Activated B cell treated with CpG ODN at 0.5 μM for 24 hours (primary cell): ENCODE measurements at regions of chr7 and their contacts with region 1.

Region 1: DNA sequence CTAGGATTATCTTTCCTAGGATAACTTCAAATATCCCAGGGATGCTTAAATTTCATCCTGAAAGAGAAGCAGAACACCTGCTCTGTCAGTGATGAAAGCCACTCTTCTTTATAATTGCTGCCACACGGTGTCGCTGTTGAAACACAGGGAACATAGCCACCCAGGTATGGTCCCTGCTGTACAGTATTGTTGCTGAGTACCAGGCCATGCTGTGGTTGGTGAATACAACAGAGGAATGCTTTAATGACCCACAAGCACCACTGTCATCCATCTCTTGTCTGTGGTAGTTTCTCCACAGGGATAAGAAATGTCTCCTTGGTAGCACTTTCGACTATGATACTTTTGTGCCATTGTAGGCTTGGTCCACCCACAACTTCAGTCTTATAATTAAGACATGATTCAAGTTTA is 70.6 kb upstream of the STARD3NL start:
- DNase-seq: no peak
- ATAC-seq: peak; percentile 62
- H3K4me3 Mint-ChIP-seq: no peak overlapping the region
- H3K27ac Mint-ChIP-seq: no peak overlapping the region
- H3K4me1 Mint-ChIP-seq: no peaks in the 10 kb centered on the region
- H3K27me3 Mint-ChIP-seq: peaks cover 9% of the 10 kb centered on the region
- CTCF ChIP-seq: peak; percentile 59

Region 2: DNA sequence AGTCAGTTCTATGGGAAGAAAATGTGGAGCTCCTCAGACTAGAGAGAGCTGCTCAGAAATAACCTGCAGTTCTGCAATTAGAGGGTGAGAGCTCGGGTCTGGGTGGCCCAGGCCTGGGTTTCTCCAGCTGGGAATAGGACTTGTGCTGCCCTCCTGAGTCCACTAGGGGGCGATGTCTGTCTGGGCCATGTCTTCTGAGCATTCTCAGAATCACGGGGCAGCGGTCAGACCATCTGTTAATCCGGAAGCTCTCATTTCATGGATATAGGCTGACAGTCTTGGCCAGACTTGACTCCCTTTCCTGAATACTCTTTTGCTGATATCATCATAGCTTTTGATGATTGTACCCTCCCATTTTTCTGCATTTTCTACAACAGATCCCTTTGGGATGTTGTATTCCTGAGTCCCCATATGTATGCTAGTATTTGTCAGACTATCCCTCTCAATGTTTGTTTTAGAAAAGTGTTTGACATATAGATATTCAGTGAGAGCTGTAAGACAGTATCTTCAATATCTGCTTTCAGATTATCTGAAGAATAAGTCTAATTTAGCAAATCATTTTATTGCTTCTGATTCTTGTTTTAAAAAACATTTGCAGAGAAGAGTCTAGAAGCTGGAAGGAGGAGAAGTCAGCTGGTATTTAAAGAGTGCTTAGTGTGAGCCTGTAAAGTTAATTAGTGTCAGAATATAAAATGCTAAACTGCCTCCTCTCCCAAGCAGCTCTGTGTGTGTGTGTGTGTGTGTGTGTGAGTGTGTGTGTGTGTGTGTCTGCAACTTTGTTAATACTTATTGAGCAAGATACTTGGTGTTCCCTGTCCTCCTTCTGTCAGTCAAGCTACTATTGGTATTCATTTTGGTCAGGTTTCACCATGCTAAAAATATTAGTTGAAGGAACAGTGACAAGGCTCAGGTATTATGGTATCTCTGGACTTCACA is 108.5 kb after region 1 on chr7:
- CTCF ChIA-PET with region 1: interaction called, 153 read pairs
- POLR2A ChIA-PET with region 1: no interaction called
- intact Hi-C with region 1: no loop called
- DNase-seq: peak; percentile 40
- ATAC-seq: peak; percentile 97
- H3K4me3 Mint-ChIP-seq: no peak overlapping the region
- H3K27ac Mint-ChIP-seq: no peak overlapping the region
- H3K4me1 Mint-ChIP-seq: peaks cover 7% of the 10 kb centered on the region
- H3K27me3 Mint-ChIP-seq: no peaks in the 10 kb centered on the region
- CTCF ChIP-seq: peak; percentile 75

Region 3: GRCh38 chr7:38222481-38223096 is 115.1 kb after region 1 on chr7:
- CTCF ChIA-PET with region 1: interaction called, 153 read pairs
- POLR2A ChIA-PET with region 1: no interaction called
- intact Hi-C with region 1: loop called (anchors 1 kb)
- DNase-seq: no peak
- ATAC-seq: peak; percentile 67
- H3K4me3 Mint-ChIP-seq: no peak overlapping the region
- H3K27ac Mint-ChIP-seq: no peak overlapping the region
- H3K4me1 Mint-ChIP-seq: no peaks in the 10 kb centered on the region
- H3K27me3 Mint-ChIP-seq: no peaks in the 10 kb centered on the region
- CTCF ChIP-seq: peak; percentile 76

Region 4: DNA sequence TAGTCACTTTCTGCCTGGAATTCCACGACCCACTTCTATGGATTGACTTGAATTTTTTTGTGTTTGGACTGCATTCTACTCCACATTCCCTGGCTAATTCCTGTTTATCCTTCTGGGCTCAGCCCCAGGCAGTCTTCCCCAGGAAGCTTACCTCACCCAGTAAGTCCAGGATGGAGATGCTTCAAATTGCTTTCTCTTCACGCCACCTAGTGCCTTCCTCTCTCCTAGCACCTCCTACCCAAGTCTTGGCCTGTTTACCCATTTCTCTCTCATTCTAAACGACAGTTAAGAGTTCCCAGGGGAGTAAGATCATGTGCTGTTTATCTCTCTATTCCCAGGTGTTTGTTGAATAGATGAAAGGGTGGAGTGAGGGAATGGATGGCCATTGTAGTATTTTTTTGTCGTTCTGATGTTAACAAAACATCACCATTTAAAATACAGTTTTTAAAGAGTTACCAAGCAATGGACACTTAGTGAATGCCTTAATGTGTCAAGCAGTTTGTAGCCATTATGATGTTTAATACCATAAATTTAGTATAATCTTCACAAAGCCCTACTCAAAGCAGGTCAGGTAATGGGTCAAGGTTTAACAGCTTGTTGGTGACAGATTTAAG is 211.4 kb after region 1 on chr7:
- CTCF ChIA-PET with region 1: interaction called, 3 read pairs
- POLR2A ChIA-PET with region 1: no interaction called
- intact Hi-C with region 1: loop called (anchors 2 kb)
- DNase-seq: no peak
- ATAC-seq: peak; percentile 45
- H3K4me3 Mint-ChIP-seq: no peak overlapping the region
- H3K27ac Mint-ChIP-seq: no peak overlapping the region
- H3K4me1 Mint-ChIP-seq: no peaks in the 10 kb centered on the region
- H3K27me3 Mint-ChIP-seq: peaks cover 13% of the 10 kb centered on the region
- CTCF ChIP-seq: no peak

Region 5: GRCh38 chr7:38335492-38336147 is 228.1 kb after region 1 on chr7:
- CTCF ChIA-PET with region 1: interaction called, 8 read pairs
- POLR2A ChIA-PET with region 1: no interaction called
- intact Hi-C with region 1: loop called (anchors 1 kb)
- DNase-seq: peak; percentile 67
- ATAC-seq: peak; percentile 99
- H3K4me3 Mint-ChIP-seq: peak overlapping the region; percentile 28
- H3K27ac Mint-ChIP-seq: peak overlapping the region; percentile 30
- H3K4me1 Mint-ChIP-seq: peaks cover 15% of the 10 kb centered on the region
- H3K27me3 Mint-ChIP-seq: no peaks in the 10 kb centered on the region
- CTCF ChIP-seq: peak; percentile 45

Region 6: GRCh38 chr7:38369816-38370493 is 262.5 kb after region 1 on chr7:
- CTCF ChIA-PET with region 1: interaction called, 29 read pairs
- POLR2A ChIA-PET with region 1: no interaction called
- intact Hi-C with region 1: loop called (anchors 1 kb)
- DNase-seq: peak; percentile 53
- ATAC-seq: peak; percentile 84
- H3K4me3 Mint-ChIP-seq: no peak overlapping the region
- H3K27ac Mint-ChIP-seq: no peak overlapping the region
- H3K4me1 Mint-ChIP-seq: peaks cover 25% of the 10 kb centered on the region
- H3K27me3 Mint-ChIP-seq: no peaks in the 10 kb centered on the region
- CTCF ChIP-seq: peak; percentile 75

Region 7: DNA sequence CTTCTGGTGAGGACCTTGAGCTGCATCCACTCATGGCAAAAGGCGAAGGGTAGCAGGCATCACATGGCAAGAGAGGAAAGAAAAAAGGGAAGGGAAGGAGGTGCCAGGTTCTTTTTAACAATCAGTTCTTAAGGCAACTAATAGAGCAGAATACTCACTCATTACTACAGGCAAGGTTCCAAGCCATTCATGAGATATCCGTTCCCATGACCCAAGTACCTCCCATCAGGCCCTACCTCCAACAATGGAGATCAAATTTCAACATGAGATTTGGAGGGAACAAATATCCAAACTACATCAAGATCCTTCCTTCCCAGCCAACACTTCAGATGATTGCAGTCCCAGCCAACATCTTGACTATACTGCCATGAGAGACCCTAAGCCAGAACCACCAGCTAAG is 1419.8 kb after region 1 on chr7:
- CTCF ChIA-PET with region 1: no interaction called
- POLR2A ChIA-PET with region 1: no interaction called
- intact Hi-C with region 1: loop called (anchors 5 kb)
- DNase-seq: no peak
- ATAC-seq: no peak
- H3K4me3 Mint-ChIP-seq: no peak overlapping the region
- H3K27ac Mint-ChIP-seq: no peak overlapping the region
- H3K4me1 Mint-ChIP-seq: no peaks in the 10 kb centered on the region
- H3K27me3 Mint-ChIP-seq: peaks cover 7% of the 10 kb centered on the region
- CTCF ChIP-seq: no peak